HCT116 (cell line): ENCODE measurements at regions of chr15 and their contacts with region 1.

Region 1: GRCh38 chr15:92881802-92882696 is 18.1 kb upstream of the CHD2 start:
- DNase-seq: peak; percentile 99
- ATAC-seq: peak; percentile 98
- H3K4me3 ChIP-seq: peak overlapping the region; percentile 85 to 95
- H3K27ac ChIP-seq: peak overlapping the region; percentile 96
- H3K4me1 ChIP-seq: peaks cover 15 to 26% of the 10 kb centered on the region in 2 experiments; a peak in 3 of 4 replicates
- H3K27me3 ChIP-seq: no peaks in the 10 kb centered on the region
- CTCF ChIP-seq: no peak
- POLR2A ChIP-seq: peak; percentile 79
- RAD21 ChIP-seq: no peak

Region 2: GRCh38 chr15:92693691-92694331 is 188.2 kb before region 1 on chr15:
- CTCF ChIA-PET with region 1: no interaction called
- POLR2A ChIA-PET with region 1: no interaction called
- RAD21 ChIA-PET with region 1: no interaction called
- intact Hi-C with region 1: no loop called
- DNase-seq: peak; percentile 34
- ATAC-seq: peak; percentile 99
- H3K4me3 ChIP-seq: no peak overlapping the region
- H3K27ac ChIP-seq: no peak overlapping the region
- H3K4me1 ChIP-seq: no peaks in the 10 kb centered on the region
- H3K27me3 ChIP-seq: peaks cover 6% of the 10 kb centered on the region; the same call in 1 of the 2 replicates
- CTCF ChIP-seq: peak; percentile 40 to 82 (median 67); a peak in 5 of 6 replicates
- POLR2A ChIP-seq: no peak
- RAD21 ChIP-seq: peak; percentile 48

Region 3: DNA sequence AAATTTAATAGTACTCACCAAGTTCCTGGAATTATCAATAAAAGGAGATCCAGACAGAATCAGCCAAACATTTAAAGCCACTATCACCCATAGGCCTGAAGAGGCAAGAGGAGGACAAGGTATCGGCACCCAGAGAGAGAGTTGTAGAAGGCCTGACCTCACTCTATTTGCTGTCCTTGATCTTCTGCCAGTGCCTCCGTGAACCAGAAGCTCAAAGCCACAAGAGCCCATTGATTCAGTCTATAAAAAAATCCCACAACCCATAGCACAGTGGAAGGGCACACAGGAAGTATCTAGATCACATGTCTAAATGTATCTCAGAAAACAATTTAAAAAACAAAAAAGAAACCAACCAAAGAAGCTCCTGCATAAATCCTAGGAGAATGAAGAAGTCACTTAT is 157.9 kb before region 1 on chr15:
- CTCF ChIA-PET with region 1: no interaction called
- POLR2A ChIA-PET with region 1: no interaction called
- RAD21 ChIA-PET with region 1: no interaction called
- intact Hi-C with region 1: no loop called
- DNase-seq: no peak
- ATAC-seq: no peak
- H3K4me3 ChIP-seq: no peak overlapping the region
- H3K27ac ChIP-seq: no peak overlapping the region
- H3K4me1 ChIP-seq: no peaks in the 10 kb centered on the region
- H3K27me3 ChIP-seq: no peaks in the 10 kb centered on the region
- CTCF ChIP-seq: no peak
- POLR2A ChIP-seq: no peak
- RAD21 ChIP-seq: no peak

Region 4: DNA sequence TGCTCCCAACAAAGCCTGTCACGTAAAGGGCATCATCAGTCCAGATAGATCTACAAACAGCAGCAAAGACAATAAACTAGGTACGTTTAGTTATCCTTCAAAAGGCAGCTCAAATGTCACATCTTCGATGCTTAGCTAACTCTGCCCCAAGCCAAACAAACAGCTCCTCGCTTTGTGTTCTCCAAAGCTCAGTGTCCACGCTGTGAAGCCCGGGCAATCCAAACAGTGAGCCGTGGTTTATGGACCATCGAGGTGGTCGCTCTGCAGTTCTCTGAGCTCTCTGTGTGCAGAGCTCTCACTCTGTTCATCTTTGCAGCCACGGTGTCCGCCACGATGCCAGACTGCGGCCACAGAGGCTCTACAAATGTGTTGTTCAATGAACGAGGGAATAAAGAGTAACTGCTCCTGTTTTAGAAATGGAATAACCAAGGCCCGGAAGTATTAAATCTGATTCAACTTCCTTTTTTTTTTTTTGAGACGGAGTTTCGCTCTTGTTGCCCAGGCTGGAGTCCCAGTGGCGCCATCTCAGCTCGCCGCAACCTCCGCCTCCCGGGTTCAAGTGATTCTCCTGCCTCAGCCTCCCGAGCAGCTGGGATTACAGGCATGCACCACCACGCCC is 109.3 kb before region 1 on chr15:
- CTCF ChIA-PET with region 1: no interaction called
- POLR2A ChIA-PET with region 1: no interaction called
- RAD21 ChIA-PET with region 1: no interaction called
- intact Hi-C with region 1: no loop called
- DNase-seq: no peak
- ATAC-seq: no peak
- H3K4me3 ChIP-seq: no peak overlapping the region
- H3K27ac ChIP-seq: no peak overlapping the region
- H3K4me1 ChIP-seq: no peaks in the 10 kb centered on the region
- H3K27me3 ChIP-seq: no peaks in the 10 kb centered on the region
- CTCF ChIP-seq: no peak
- POLR2A ChIP-seq: no peak
- RAD21 ChIP-seq: no peak

Region 5: DNA sequence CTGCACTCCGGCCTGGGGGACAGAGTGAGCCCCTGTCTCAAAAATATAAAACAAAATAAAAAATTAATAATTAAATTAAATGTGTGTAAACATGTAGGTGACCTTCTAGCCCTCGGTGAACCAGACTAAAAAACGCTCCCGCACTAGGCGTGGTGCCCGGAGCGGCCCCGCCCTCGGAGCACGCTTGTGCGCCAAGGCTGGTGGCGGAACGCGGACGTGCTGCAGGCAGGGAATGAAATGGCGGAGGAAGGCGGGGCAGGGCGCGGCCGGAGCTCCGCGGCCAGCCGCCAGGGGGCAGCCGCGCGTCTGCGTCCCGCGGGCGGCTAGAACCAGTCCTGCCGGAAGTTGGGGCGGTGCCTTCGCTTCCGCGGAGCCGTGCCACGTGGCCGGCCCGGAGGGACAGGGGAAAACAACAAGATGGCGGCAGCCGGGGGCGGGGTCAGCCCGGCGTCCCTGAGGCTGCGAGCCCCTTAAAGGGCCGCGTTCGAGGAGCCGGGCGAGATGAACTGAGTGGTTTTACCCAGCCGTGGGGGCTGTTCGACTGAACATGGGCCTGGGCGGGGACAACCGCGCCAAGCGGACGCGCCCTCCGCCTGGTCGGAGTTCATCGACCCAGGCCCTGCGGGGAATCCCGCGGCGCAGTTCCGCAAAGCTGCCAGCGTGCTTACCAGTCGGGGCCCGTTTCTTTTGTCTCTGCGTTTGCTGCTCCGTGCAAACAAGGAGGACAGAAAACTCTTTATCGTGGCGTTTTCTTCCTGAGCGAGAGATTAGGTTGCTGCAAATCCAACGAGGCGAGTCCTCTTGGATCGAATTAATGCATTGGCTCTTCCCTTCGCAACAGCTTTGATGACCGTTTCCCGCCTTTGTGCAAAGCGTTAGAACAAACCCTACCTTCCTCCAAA is 72.8 kb before region 1 on chr15:
- CTCF ChIA-PET with region 1: interaction called, 7 read pairs
- POLR2A ChIA-PET with region 1: interaction called, 17 read pairs
- RAD21 ChIA-PET with region 1: no interaction called
- intact Hi-C with region 1: loop called (anchors 2 kb)
- DNase-seq: peak; percentile 83
- ATAC-seq: peak; percentile 81
- H3K4me3 ChIP-seq: peak overlapping the region; percentile 39 to 58
- H3K27ac ChIP-seq: peak overlapping the region; percentile 77
- H3K4me1 ChIP-seq: peaks cover 48 to 69% of the 10 kb centered on the region in 2 experiments
- H3K27me3 ChIP-seq: no peaks in the 10 kb centered on the region
- CTCF ChIP-seq: peak in 2 of 3 experiments; percentile 85 to 92; a peak in 4 of 6 replicates
- POLR2A ChIP-seq: peak; percentile 79
- RAD21 ChIP-seq: no peak

Region 6: DNA sequence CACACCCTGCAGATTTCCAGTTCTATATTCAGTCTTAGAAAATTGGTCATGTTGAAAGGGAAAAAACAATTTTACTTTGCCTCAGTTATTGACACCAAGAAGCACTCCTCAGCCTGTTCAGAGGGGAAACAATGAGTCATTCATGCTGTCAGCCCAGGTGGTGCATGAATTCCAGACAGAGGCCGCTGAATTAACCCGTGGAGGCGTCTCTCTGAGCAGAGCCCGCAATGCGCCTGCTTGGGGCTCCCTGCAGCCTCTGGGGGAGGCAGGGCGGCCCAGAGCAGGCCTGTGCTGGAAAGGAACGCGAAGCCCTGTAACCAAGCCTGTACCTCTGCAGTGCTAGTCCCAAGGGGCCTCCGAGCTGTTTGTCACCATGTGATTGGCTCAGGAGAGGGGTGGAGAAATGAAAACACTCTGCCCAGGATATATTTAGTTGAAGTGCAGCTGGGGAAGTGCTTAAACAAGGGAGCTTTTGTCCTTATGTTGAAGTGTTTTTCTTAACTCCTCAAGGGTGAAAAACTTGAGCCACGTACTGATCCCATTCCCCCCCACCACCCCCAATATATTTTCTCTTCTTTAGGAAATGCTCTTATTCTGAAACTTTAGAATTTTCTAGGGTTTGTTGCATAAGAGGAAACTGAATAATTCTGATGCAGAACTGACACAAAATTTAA is 50.3 kb before region 1 on chr15:
- CTCF ChIA-PET with region 1: no interaction called
- POLR2A ChIA-PET with region 1: interaction called, 27 read pairs
- RAD21 ChIA-PET with region 1: interaction called in 1 of 2 experiments, 5 read pairs
- intact Hi-C with region 1: no loop called
- DNase-seq: peak; percentile 95
- ATAC-seq: peak; percentile 99
- H3K4me3 ChIP-seq: peak overlapping the region in 1 of 2 experiments; percentile 21
- H3K27ac ChIP-seq: peak overlapping the region; percentile 92
- H3K4me1 ChIP-seq: peaks cover 26 to 32% of the 10 kb centered on the region in 2 experiments
- H3K27me3 ChIP-seq: no peaks in the 10 kb centered on the region
- CTCF ChIP-seq: no peak
- POLR2A ChIP-seq: no peak
- RAD21 ChIP-seq: peak; percentile 43; the same call in 1 of the 2 replicates

Region 7: GRCh38 chr15:92903941-92904831 is 22.1 kb after region 1 on chr15:
- CTCF ChIA-PET with region 1: interaction called, 17 read pairs
- POLR2A ChIA-PET with region 1: interaction called, 93 read pairs
- RAD21 ChIA-PET with region 1: no interaction called
- intact Hi-C with region 1: no loop called
- DNase-seq: peak; percentile 96
- ATAC-seq: peak; percentile 86
- H3K4me3 ChIP-seq: peak overlapping the region; percentile 69 to 72
- H3K27ac ChIP-seq: peak overlapping the region; percentile 97
- H3K4me1 ChIP-seq: peaks cover 48 to 70% of the 10 kb centered on the region in 2 experiments
- H3K27me3 ChIP-seq: no peaks in the 10 kb centered on the region
- CTCF ChIP-seq: no peak
- POLR2A ChIP-seq: peak; percentile 37
- RAD21 ChIP-seq: 0 out of 2 replicates have a peak, but pooled peaks have one; percentile 21

Region 8: DNA sequence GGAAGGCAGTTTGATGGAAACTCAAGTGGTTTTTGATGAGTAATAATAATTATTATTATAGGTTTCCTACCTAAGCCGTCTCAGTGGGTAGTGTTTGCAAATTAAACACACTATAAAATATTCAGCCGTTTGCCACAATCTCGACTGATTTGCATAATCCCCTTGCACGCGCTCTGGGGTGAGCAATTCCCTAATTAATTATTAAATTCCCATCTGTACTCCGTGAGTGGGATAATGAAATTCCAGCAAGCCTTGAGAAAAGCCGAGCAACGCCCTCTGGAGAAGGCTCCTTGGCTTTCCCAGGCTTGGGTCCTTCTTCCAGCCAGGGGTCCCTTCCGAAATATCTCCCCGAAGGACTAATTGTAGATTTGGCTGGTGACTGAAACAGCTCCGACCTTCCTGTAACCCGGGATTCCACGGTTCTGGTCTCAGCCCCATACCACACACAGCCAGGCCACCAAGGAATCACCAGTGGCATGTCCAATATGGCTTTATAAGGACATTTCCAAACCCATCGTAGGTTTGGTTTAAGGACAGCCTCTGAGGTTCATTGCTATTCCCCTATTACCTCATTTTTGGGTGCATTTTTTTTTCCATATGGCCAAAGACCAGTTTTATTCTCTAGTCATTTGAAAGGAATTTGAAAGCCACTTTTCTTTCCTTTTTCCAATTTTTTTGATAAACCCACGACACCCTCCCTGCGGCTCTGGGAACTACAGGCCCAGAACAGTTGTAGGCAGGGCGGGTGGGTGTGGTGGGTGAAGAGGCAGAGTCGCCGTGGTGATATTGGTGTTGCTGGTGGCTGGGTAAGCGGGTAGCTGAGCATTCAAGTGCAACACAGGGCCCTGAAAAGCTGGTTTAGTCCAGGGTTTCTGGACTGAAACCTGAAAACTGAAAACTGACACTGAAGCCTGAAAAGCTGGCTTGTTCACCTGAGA is 240.2 kb after region 1 on chr15:
- CTCF ChIA-PET with region 1: no interaction called
- POLR2A ChIA-PET with region 1: no interaction called
- RAD21 ChIA-PET with region 1: no interaction called
- intact Hi-C with region 1: no loop called
- DNase-seq: no peak
- ATAC-seq: no peak
- H3K4me3 ChIP-seq: no peak overlapping the region
- H3K27ac ChIP-seq: no peak overlapping the region
- H3K4me1 ChIP-seq: no peaks in the 10 kb centered on the region
- H3K27me3 ChIP-seq: no peaks in the 10 kb centered on the region
- CTCF ChIP-seq: no peak
- POLR2A ChIP-seq: no peak
- RAD21 ChIP-seq: no peak